ENCODE measurements at regions of chr19 and their contacts with region 1.

Region 1: GRCh38 chr19:18846862-18847548 is 15.2 kb downstream of the UPF1 start:
- DNase-seq: peak; percentile 87
- ATAC-seq: peak; percentile 96
- H3K4me3 Mint-ChIP-seq: no peak overlapping the region
- H3K27ac Mint-ChIP-seq: peak overlapping the region; percentile 96
- H3K4me1 Mint-ChIP-seq: peaks cover 2% of the 10 kb centered on the region
- H3K27me3 Mint-ChIP-seq: no peaks in the 10 kb centered on the region
- CTCF ChIP-seq: peak; percentile 76; the same call in 1 of the 2 replicates

Region 2: DNA sequence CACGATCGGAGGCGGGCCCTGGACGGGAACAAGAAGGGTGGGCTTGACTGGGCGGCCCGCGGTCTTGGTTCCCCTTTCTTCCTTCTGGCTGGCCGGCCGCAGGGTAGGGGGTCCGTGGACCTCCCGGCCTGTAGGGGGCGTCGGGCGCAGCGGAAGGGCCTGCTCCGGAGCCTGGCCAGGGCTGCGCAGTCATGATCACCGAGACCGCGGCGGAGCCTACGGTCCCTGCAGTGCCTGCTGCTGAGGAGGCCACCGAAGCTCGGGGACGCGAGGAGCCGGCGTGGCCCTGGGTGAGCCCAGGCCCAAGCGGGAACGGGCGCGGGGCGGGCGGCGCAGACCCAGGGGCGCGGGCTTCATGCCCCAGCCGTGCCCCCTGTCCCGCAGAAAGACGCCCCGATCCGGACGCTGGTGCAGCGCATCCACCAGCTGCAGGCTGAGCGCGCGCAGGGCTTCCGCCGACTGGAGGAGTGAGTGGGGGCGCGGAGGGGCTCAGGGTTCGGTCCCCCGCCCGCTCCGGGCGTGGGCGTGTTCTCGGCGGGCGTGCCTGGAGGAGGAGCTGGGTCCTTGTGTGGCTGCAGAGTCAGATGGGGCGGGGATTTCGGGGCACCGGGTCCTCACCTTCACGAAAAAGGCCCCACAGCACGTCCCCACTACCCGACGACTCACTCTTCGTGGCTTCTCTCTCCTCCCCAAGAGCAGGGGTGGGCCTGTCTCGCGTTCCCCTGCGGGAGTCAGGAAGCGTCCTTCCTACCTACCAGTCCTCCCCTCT is 258.2 kb before region 1 on chr19 and contains the start of gene REX1BD:
- CTCF ChIA-PET with region 1: interaction called, 17 read pairs
- POLR2A ChIA-PET with region 1: interaction called, 3 read pairs
- DNase-seq: peak; percentile 87
- ATAC-seq: peak; percentile 51
- H3K4me3 Mint-ChIP-seq: peak within 1 kb of the TSS; percentile 86
- H3K27ac Mint-ChIP-seq: peak within 1 kb of the TSS; percentile 98
- H3K4me1 Mint-ChIP-seq: peaks cover 32% of the 10 kb centered on the region
- H3K27me3 Mint-ChIP-seq: peaks cover 10% of the 10 kb centered on the region
- CTCF ChIP-seq: peak; percentile 85
- total RNA-seq, gene REX1BD: 90.2 to 107 TPM (median 99.0 TPM) in 3 replicates

Region 3: GRCh38 chr19:18771328-18772242 is 75.4 kb before region 1 on chr19:
- CTCF ChIA-PET with region 1: interaction called, 42 read pairs
- POLR2A ChIA-PET with region 1: no interaction called
- DNase-seq: peak; percentile 60
- ATAC-seq: peak; percentile 43
- H3K4me3 Mint-ChIP-seq: no peak overlapping the region
- H3K27ac Mint-ChIP-seq: no peak overlapping the region
- H3K4me1 Mint-ChIP-seq: no peaks in the 10 kb centered on the region
- H3K27me3 Mint-ChIP-seq: peaks cover 88% of the 10 kb centered on the region
- CTCF ChIP-seq: no peak

Region 4: DNA sequence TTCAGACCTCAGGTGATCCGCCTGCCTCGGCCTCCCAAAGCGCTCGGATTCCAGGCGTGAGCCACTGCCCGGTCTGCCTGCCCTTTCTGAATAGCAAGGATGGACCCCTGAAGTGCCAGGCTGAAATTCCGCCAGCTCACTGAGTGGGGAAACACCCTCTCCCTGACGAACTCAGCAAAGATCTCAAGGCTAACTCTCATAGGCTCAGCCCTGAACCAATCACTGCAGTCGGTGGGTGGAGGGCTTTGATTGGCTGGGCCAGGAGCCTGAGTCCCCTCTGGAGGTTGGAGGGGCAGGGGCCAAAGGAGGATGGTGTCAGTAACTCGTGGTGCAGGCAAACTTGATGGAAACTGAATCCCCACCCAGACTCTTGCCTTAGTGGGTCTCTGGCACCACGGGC is 44.7 kb before region 1 on chr19:
- CTCF ChIA-PET with region 1: interaction called, 10 read pairs
- POLR2A ChIA-PET with region 1: no interaction called
- DNase-seq: peak; percentile 60
- ATAC-seq: peak; percentile 97
- H3K4me3 Mint-ChIP-seq: peak overlapping the region; percentile 27; the same call in 1 of the 2 replicates
- H3K27ac Mint-ChIP-seq: peak overlapping the region; percentile 49; the same call in 1 of the 2 replicates
- H3K4me1 Mint-ChIP-seq: no peaks in the 10 kb centered on the region
- H3K27me3 Mint-ChIP-seq: peaks cover 18% of the 10 kb centered on the region
- CTCF ChIP-seq: no peak

Region 5: GRCh38 chr19:18865973-18866799 is 19.2 kb after region 1 on chr19:
- CTCF ChIA-PET with region 1: interaction called, 18 read pairs
- POLR2A ChIA-PET with region 1: no interaction called
- DNase-seq: peak; percentile 78
- ATAC-seq: peak; percentile 74
- H3K4me3 Mint-ChIP-seq: no peak overlapping the region
- H3K27ac Mint-ChIP-seq: peak overlapping the region; percentile 74; the same call in 1 of the 2 replicates
- H3K4me1 Mint-ChIP-seq: peaks cover 10% of the 10 kb centered on the region; the same call in 1 of the 2 replicates
- H3K27me3 Mint-ChIP-seq: peaks cover 7% of the 10 kb centered on the region
- CTCF ChIP-seq: peak; percentile 96

Region 6: GRCh38 chr19:18919086-18919899 is 72.3 kb after region 1 on chr19 and contains the starts of genes COPE and DDX49:
- CTCF ChIA-PET with region 1: interaction called, 13 read pairs
- POLR2A ChIA-PET with region 1: no interaction called
- DNase-seq: peak; percentile 97
- ATAC-seq: peak; percentile 99
- H3K4me3 Mint-ChIP-seq: peak within 1 kb of the TSS; percentile 99
- H3K27ac Mint-ChIP-seq: peak within 1 kb of the TSS; percentile 93
- H3K4me1 Mint-ChIP-seq: peaks cover 10% of the 10 kb centered on the region
- H3K27me3 Mint-ChIP-seq: no peaks in the 10 kb centered on the region; the same call in 1 of the 2 replicates
- CTCF ChIP-seq: no peak
- total RNA-seq, gene COPE: 224 to 240 TPM (median 228 TPM) in 3 replicates
- total RNA-seq, gene DDX49: 30.1 to 47.9 TPM (median 36.4 TPM) in 3 replicates